Activated CD4-positive, alpha-beta T cell treated with anti-CD3 and anti-CD28 coated beads, Interleukin-2, amount 10 ng/mL, durations not matched to agents 24 days and 14 days (primary cell): ENCODE measurements at regions of chr6 and their contacts with region 1.

Region 1: GRCh38 chr6:97394160-97394748 is 111.2 kb upstream of the MMS22L start:
- DNase-seq: peak; percentile 84
- H3K4me3 Mint-ChIP-seq: no peak overlapping the region
- H3K27ac Mint-ChIP-seq: no peak overlapping the region
- H3K4me1 Mint-ChIP-seq: no peaks in the 10 kb centered on the region
- H3K27me3 Mint-ChIP-seq: peaks cover 14% of the 10 kb centered on the region

Region 2: DNA sequence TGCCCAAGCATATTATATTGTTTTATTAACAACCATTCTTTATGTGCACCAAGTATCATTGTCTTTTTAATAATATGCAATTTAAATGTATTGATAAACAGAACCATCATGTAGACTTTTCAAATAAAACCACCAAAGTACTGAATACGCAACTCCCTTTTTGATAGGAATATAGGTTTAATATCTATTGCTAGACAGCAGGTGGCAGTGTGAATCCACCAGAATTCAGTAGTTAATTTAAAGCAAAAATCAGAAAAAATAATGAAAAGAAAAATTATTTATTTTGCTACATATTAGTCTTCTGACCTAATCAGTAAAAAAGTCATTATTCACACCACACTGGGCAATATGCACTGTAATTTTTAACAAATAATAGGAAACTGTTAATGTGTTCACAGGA is 326.0 kb before region 1 on chr6:
- intact Hi-C with region 1: loop called (anchors 1 kb)
- DNase-seq: peak; percentile 59
- H3K4me3 Mint-ChIP-seq: no peak overlapping the region
- H3K27ac Mint-ChIP-seq: no peak overlapping the region
- H3K4me1 Mint-ChIP-seq: peaks cover 6% of the 10 kb centered on the region
- H3K27me3 Mint-ChIP-seq: no peaks in the 10 kb centered on the region

Region 3: GRCh38 chr6:97282726-97283617 is 111.3 kb before region 1 on chr6 and contains the start of gene MMS22L:
- intact Hi-C with region 1: loop called (anchors 10 kb)
- DNase-seq: peak; percentile 98
- H3K4me3 Mint-ChIP-seq: peak within 1 kb of the TSS; percentile 91
- H3K27ac Mint-ChIP-seq: peak within 1 kb of the TSS; percentile 94
- H3K4me1 Mint-ChIP-seq: peaks cover 23% of the 10 kb centered on the region
- H3K27me3 Mint-ChIP-seq: peaks cover 11% of the 10 kb centered on the region
- total RNA-seq, gene MMS22L: 54.8 and 65.2 TPM in 2 replicates